AG04450 (cell line): ENCODE measurements at regions of chr6 and their contacts with region 1.

Region 1: GRCh38 chr6:153032255-153032882 is 29.9 kb upstream of the MTRF1L start:
- DNase-seq: peak; percentile 34
- H3K4me3 ChIP-seq: no peak overlapping the region
- H3K27ac ChIP-seq: no peak overlapping the region
- H3K27me3 ChIP-seq: no peaks in the 10 kb centered on the region
- CTCF ChIP-seq: peak; percentile 44; the same call in 1 of the 2 replicates

Region 2: DNA sequence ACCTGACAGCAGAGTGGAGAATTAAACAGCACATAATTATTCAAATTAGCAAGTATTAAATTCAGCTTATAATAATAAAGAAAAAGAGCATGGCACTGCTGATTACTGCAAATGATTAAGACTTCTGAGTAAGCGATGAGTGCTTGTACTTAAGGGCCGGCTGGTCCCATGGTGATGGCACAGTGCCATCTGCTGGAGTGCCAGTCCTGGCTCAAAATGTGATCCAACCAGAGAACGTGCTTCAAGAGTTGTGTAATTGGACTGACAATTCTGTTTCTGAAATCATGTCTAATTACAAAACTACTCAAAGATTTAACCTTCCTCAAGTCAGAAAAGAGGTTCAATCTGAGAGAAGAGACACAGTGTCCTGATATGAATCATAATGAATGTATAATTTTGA is 280.3 kb after region 1 on chr6:
- CTCF ChIA-PET with region 1: interaction called, 18 read pairs
- POLR2A ChIA-PET with region 1: no interaction called
- DNase-seq: no peak
- H3K4me3 ChIP-seq: no peak overlapping the region
- H3K27ac ChIP-seq: no peak overlapping the region
- H3K27me3 ChIP-seq: no peaks in the 10 kb centered on the region
- CTCF ChIP-seq: peak; percentile 36

Region 3: DNA sequence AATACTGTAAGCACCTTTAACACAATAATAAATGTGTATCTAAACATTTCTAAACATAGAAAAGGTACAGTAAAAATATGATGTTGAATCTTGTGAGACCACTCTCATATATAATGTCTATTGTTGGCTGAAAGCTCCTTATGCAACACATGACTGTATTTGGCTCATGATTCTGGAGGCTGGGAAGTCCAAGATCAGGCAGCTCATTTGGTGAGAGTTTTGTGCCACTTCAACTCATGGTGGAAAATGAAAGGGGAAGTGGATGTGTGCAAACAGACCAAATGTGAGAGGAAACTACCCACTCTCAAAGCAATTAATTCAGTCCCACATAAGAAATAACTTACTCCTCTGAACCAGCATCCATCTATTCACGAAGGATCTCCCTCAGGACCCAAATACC is 748.9 kb after region 1 on chr6:
- CTCF ChIA-PET with region 1: no interaction called
- POLR2A ChIA-PET with region 1: no interaction called
- DNase-seq: no peak
- H3K4me3 ChIP-seq: no peak overlapping the region
- H3K27ac ChIP-seq: no peak overlapping the region
- H3K27me3 ChIP-seq: no peaks in the 10 kb centered on the region
- CTCF ChIP-seq: no peak